GM12878 (cell line): ENCODE measurements at regions of chr3 and their contacts with region 1.

Region 1: DNA sequence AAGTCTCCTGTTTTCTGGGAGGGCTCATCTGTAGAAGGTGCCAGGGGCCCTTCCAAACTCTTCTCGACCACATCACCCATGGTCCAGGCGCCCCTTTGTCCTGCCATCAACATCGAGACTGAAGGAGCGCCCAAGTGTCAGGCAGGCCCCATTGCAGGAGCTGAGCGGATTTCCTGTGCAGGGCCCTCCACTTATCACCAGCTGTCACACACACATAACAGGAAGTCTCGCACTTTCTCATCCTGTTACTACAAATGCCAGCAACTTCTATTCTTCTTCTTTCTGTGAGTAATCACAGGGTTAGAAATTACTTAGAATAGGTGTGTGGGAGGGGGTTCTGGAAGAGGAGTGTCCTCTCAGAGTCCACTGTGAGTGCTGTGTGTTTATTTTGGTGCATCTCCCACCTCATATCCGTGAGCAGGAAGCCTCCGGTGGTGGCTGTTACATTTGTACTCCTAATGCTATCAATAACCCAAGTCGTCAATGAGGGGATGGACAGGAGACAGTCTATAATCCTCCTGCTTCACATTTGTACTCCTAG is at the start of gene KLHL6:
- DNase-seq: peak; percentile 64
- ATAC-seq: peak; percentile 79
- H3K4me3 ChIP-seq: peak within 1 kb of the TSS; percentile 75
- H3K27ac ChIP-seq: peak within 1 kb of the TSS; percentile 56
- H3K4me1 ChIP-seq: peaks cover 22% of the 10 kb centered on the region
- H3K27me3 ChIP-seq: peaks cover 0 to 3% of the 10 kb centered on the region in 2 experiments; a peak in 1 of 4 replicates
- CTCF ChIP-seq: no peak
- EP300 ChIP-seq: peak; percentile 63 to 72; a peak in 2 of 4 replicates
- POLR2A ChIP-seq: peak; percentile 85
- RAD21 ChIP-seq: peak; percentile 29
- polyA plus RNA-seq, gene KLHL6: 4.0 to 4.2 TPM

Region 2: DNA sequence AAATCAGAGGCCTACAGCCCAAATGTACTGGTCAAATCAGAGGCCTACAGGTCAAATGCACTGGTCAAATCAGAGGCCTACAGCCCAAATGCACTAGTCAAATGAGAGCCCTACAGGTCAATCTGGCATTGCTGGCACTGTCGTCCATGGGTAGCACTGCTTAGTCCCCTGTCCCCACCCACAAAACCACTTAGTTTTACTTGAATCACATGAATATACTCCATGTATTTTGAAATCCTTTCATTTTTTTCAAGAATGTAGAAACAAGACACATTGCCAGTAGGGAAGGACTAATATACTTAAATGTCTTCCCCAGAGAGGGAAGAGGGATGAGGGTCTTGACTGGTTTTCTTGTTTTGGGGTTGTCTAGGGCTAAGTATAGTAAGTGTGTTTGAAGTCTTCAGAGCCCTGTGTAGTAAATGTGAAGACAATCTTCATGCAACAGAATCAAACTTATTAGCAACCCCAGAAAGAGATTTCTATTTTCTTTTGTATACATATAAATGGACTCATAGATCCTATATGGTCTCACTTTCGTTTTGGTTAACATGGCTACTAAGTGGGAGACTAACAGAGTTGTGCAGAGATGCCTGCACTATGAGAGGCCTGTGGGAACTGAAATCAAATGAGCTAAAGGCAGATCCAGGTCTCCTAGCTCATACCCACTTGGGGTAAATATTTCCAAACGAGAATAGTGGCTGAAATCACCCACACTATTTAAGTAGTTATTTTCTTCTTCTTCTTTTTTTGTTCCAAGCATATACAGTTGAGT is 537.0 kb before region 1 on chr3:
- CTCF ChIA-PET with region 1: no interaction called
- POLR2A ChIA-PET with region 1: no interaction called
- RAD21 ChIA-PET with region 1: no interaction called
- SMC1A ChIA-PET with region 1: no interaction called
- in situ Hi-C with region 1: no loop called
- intact Hi-C with region 1: no loop called
- DNase-seq: no peak
- ATAC-seq: no peak
- H3K4me3 ChIP-seq: no peak overlapping the region
- H3K27ac ChIP-seq: no peak overlapping the region
- H3K4me1 ChIP-seq: no peaks in the 10 kb centered on the region
- H3K27me3 ChIP-seq: no peaks in the 10 kb centered on the region
- CTCF ChIP-seq: no peak
- EP300 ChIP-seq: no peak
- POLR2A ChIP-seq: no peak
- RAD21 ChIP-seq: no peak

Region 3: DNA sequence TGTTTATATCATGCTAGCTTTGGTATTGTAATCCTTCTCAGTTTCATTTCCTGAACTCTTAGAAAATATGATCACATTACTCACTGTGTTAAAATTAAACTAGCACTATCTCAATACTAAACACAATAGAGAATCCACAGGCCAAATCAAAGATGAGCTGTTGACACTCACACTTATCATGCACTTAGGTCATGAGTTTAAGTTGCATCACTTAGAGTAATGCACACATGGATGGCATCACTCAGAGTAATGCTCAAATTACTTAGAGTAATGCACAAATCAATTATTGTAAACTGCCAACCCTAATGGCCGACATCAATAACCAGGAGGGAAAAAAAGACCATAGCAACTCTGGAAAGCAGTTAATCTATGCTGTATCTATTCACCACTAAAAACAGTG is 87.2 kb before region 1 on chr3:
- CTCF ChIA-PET with region 1: interaction called, 42 read pairs
- POLR2A ChIA-PET with region 1: no interaction called
- RAD21 ChIA-PET with region 1: interaction called, 27 read pairs
- SMC1A ChIA-PET with region 1: interaction called, 42 read pairs
- in situ Hi-C with region 1: loop called (anchors 5 kb)
- intact Hi-C with region 1: loop called (anchors 1 kb)
- DNase-seq: no peak
- ATAC-seq: no peak
- H3K4me3 ChIP-seq: no peak overlapping the region
- H3K27ac ChIP-seq: no peak overlapping the region
- H3K4me1 ChIP-seq: no peaks in the 10 kb centered on the region
- H3K27me3 ChIP-seq: no peaks in the 10 kb centered on the region
- CTCF ChIP-seq: no peak
- EP300 ChIP-seq: no peak
- POLR2A ChIP-seq: no peak
- RAD21 ChIP-seq: no peak

Region 4: DNA sequence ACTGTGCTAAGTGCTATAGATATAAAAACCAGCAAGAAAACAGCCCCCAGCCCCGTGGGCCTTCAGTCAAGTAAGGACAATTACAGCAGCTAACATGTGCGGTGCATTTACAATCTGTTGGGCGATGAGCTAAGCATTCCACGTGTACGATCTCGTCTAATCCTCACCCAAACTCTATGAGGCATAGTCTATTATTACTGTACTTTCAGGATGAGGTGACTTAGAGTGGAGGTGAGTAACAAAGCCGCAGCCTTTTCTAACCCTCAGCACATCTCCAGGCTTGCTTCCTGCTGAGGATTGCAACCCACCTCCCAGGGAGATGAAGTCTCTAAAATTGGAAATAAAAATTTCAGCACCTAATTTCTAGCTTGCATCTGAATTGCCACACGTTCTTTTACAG is 74.0 kb before region 1 on chr3:
- CTCF ChIA-PET with region 1: interaction called, 22 read pairs
- POLR2A ChIA-PET with region 1: interaction called, 4 read pairs
- RAD21 ChIA-PET with region 1: interaction called, 7 read pairs
- SMC1A ChIA-PET with region 1: interaction called, 11 read pairs
- in situ Hi-C with region 1: no loop called
- intact Hi-C with region 1: loop called (anchors 2 kb)
- DNase-seq: no peak
- ATAC-seq: peak; percentile 6; the same call in 2 of the 3 replicates
- H3K4me3 ChIP-seq: no peak overlapping the region
- H3K27ac ChIP-seq: no peak overlapping the region
- H3K4me1 ChIP-seq: no peaks in the 10 kb centered on the region
- H3K27me3 ChIP-seq: no peaks in the 10 kb centered on the region
- CTCF ChIP-seq: no peak
- EP300 ChIP-seq: no peak
- POLR2A ChIP-seq: no peak
- RAD21 ChIP-seq: no peak

Region 5: DNA sequence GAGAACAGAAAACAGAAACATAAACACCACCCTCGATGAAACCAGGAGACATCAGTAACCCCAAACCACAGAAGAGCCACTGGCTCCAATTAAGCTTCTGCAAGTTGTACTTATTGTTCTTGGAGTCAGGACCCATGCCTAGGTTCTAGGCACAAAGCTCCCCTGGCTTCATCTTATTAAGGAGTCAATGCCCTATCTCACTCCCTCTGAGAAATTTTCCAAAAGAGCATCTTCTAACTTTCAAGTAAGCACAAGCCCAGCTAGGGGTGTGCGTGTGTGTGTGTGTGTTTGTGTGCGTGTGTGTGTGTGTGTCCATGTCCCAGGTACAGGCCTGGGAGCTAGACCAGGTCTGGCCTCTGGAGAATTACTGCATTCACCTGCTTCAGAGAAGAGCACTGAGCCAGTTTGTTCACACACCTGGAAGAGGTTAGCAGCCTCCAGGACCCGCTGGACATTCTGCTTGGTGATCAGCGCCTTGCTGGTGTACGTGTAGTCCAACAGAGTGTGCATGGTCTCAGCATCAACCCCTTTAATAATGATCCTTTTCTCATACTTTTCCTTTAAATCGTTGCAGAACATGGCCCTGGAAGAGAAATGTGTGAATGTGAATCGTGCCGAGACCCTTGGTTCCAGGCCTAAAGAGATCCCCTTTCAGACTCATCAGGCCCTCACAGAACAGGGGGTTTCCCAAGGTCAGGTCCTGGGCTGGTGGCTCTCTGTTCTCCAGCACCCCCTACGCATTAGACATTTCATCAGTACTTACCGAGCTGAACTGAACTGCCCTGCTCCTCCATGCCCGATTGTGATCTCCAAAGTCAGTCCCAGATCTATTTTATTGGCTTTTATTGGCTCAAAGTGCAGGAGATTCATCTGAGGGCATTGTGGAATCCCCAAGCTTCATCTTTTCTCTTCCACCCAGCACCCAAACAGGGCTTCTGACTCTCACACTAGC is 27.9 kb before region 1 on chr3:
- CTCF ChIA-PET with region 1: interaction called, 37 read pairs
- POLR2A ChIA-PET with region 1: interaction called, 36 read pairs
- RAD21 ChIA-PET with region 1: interaction called, 77 read pairs
- SMC1A ChIA-PET with region 1: interaction called, 130 read pairs
- in situ Hi-C with region 1: no loop called
- intact Hi-C with region 1: loop called (anchors 2 kb)
- DNase-seq: peak; percentile 73
- ATAC-seq: peak; percentile 82
- H3K4me3 ChIP-seq: no peak overlapping the region; the same call in 1 of the 2 replicates
- H3K27ac ChIP-seq: peak overlapping the region; percentile 67
- H3K4me1 ChIP-seq: peaks cover 39% of the 10 kb centered on the region
- H3K27me3 ChIP-seq: no peaks in the 10 kb centered on the region
- CTCF ChIP-seq: no peak
- EP300 ChIP-seq: peak; percentile 93 to 96
- POLR2A ChIP-seq: no peak
- RAD21 ChIP-seq: peak; percentile 16; the same call in 1 of the 2 replicates

Region 6: GRCh38 chr3:183576487-183577107 is 21.0 kb after region 1 on chr3:
- CTCF ChIA-PET with region 1: interaction called, 12 read pairs
- POLR2A ChIA-PET with region 1: interaction called, 7 read pairs
- RAD21 ChIA-PET with region 1: interaction called, 79 read pairs
- SMC1A ChIA-PET with region 1: interaction called, 16 read pairs
- in situ Hi-C with region 1: no loop called
- intact Hi-C with region 1: loop called (anchors 2 kb)
- DNase-seq: no peak
- ATAC-seq: no peak
- H3K4me3 ChIP-seq: no peak overlapping the region
- H3K27ac ChIP-seq: no peak overlapping the region
- H3K4me1 ChIP-seq: peaks cover 8% of the 10 kb centered on the region; the same call in 1 of the 2 replicates
- H3K27me3 ChIP-seq: peaks cover 0 to 21% of the 10 kb centered on the region in 2 experiments; a peak in 2 of 4 replicates
- CTCF ChIP-seq: no peak
- EP300 ChIP-seq: no peak
- POLR2A ChIP-seq: no peak
- RAD21 ChIP-seq: no peak

Region 7: DNA sequence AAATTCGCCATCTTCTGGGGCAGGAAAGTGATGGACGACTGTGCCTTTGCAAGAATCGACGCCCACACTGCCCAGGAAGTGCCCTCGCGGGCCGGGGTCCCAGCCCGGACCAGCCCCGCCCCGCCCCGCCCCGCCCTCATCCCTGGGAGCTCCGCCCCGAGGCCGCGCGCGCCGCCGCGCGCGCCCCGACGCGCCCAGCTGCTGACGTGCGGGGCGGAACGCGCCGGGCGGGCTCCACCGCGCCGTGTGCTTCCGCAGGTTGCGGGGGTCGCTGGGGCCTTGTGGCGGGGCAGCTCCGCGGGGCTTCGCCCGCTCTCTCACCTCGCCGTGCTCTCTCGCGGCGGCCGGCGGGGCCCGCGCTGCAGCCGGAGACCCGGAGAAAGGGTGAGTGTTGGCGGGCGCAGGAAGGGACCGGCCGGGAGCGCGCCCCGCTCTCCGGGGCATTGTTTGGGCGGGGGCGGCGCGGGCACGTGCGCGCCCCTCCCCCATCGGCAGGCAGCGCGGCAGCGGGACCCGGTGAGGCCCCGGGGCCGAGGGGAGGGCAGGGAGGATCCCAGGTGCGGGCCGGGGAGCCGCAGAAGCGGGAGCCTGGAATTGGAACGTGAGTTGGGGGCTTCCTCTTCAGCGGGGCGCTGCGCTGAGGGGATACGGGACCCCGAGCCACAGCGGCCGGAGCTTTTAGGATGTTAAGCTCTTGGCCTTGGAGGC is 142.2 kb after region 1 on chr3 and contains the start of gene YEATS2:
- CTCF ChIA-PET with region 1: interaction called, 3 read pairs
- POLR2A ChIA-PET with region 1: interaction called, 4 read pairs
- RAD21 ChIA-PET with region 1: interaction called, 4 read pairs
- SMC1A ChIA-PET with region 1: no interaction called
- in situ Hi-C with region 1: no loop called
- intact Hi-C with region 1: loop called (anchors 5 kb)
- DNase-seq: no peak
- ATAC-seq: peak; percentile 82
- H3K4me3 ChIP-seq: peak within 1 kb of the TSS; percentile 99
- H3K27ac ChIP-seq: peak within 1 kb of the TSS; percentile 91
- H3K4me1 ChIP-seq: no peaks in the 10 kb centered on the region
- H3K27me3 ChIP-seq: no peaks in the 10 kb centered on the region
- CTCF ChIP-seq: no peak
- EP300 ChIP-seq: no peak
- POLR2A ChIP-seq: peak; percentile 81
- RAD21 ChIP-seq: no peak
- polyA plus RNA-seq, gene YEATS2: 1.9 to 3.8 TPM

Region 8: DNA sequence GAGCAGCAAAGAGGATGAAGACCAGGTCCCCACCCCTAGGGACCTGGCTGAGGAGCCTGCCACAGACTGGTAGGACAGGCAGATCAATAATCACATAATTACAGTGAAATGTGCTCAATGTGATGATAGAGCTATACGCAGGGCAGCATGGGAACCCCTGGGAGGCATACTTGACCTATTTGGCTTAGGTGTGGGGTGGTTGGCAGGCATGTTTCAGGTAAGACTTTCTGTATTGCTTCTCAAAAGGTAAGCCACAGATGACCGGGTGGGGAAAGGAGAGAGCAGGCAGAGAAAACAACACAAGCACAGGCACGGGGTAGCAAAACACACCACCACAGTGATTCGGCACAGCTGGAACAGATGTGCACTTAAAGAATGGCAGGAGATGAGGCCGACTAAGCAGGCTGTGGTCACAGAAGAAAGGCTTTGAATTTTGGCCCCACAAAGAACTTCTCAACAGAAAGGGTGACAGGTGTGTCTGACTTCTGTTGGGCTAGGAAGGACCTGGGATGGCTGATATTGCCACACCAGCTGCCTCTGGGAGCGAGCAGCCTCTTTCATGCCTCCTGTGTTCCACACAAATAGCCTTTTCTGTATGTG is 398.0 kb after region 1 on chr3:
- CTCF ChIA-PET with region 1: no interaction called
- POLR2A ChIA-PET with region 1: no interaction called
- RAD21 ChIA-PET with region 1: no interaction called
- SMC1A ChIA-PET with region 1: no interaction called
- in situ Hi-C with region 1: no loop called
- intact Hi-C with region 1: no loop called
- DNase-seq: no peak
- ATAC-seq: no peak
- H3K4me3 ChIP-seq: no peak overlapping the region
- H3K27ac ChIP-seq: no peak overlapping the region
- H3K4me1 ChIP-seq: no peaks in the 10 kb centered on the region
- H3K27me3 ChIP-seq: no peaks in the 10 kb centered on the region
- CTCF ChIP-seq: no peak
- EP300 ChIP-seq: no peak
- POLR2A ChIP-seq: no peak
- RAD21 ChIP-seq: no peak

Region 9: DNA sequence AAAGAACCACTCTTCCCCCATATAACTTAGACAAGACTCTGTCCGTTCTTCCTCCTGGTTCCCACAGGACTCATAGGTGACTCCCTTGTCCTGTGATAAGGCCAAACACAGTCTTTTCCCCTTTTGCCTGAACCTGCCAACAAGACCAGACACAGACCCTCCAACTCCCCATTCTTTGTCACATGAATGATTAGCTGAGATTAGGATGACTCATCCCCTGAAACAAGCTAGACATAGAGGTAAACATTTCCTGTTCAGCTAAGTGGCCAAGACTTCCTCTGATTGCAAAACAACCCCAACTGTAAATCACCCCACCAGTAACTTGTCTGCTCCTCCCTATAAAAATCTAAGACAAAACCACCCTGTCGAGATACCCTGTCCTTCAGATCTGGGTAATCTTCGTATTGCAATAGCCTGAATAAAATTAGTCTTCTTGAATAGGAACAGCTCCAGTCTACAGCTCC is 529.8 kb after region 1 on chr3:
- CTCF ChIA-PET with region 1: no interaction called
- POLR2A ChIA-PET with region 1: interaction called, 11 read pairs
- RAD21 ChIA-PET with region 1: no interaction called
- SMC1A ChIA-PET with region 1: no interaction called
- in situ Hi-C with region 1: no loop called
- intact Hi-C with region 1: no loop called
- DNase-seq: no peak
- ATAC-seq: no peak
- H3K4me3 ChIP-seq: no peak overlapping the region
- H3K27ac ChIP-seq: no peak overlapping the region
- H3K4me1 ChIP-seq: no peaks in the 10 kb centered on the region
- H3K27me3 ChIP-seq: no peaks in the 10 kb centered on the region
- CTCF ChIP-seq: no peak
- EP300 ChIP-seq: no peak
- POLR2A ChIP-seq: no peak
- RAD21 ChIP-seq: no peak